CD8-positive, alpha-beta T cell (primary cell): ENCODE measurements at regions of chr12 and their contacts with region 1.

Region 1: DNA sequence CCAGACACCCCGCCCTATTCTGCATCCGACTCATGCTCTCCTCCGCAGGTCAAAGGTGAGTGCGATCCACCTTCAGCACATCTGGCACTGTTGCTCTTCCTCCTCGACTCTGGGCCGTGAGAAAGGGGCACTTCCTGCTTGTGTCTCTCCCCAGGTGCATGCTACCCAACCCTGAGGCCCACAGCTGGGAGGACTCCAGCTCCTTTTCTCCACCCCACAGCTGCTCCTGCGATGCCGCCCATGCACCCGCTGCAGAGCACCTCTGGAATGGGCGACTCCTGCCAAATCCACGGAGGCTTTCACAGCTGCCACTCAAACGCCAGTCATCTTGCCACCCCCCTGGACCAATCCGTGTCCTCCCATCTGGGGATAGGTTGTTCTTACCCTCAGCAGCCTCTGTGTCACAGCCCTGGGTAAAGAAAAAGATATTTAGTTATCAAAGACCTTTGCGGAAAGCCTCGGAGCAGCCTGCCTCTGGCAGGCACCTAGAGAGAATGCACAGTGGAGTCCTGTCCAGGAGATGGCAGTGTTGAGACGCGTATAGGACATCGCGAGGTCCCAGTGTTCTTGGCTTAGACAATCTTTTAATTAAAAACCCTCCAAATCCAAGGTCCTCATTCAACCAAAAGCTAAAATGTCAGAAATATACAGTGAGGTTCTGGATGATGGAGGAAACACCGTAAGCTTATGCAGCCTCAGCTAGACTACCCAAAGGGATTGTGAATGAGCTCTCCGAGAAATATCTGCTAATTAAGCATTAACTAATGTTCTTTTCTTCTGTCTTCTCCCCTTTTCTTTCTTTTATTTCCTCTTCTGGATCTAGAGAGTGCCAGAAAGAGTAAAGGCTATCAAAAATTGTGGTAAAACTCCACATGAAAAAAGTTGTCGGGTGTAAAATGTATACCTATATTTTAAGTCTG is 54.3 kb downstream of the MYRFL start:
- DNase-seq: peak; percentile 18 to 73 (median 63)
- ATAC-seq: peak; percentile 73
- H3K4me3 ChIP-seq: no peak overlapping the region
- H3K4me3 Mint-ChIP-seq: no peak overlapping the region
- H3K27ac ChIP-seq: no peak overlapping the region
- H3K27ac Mint-ChIP-seq: no peak overlapping the region
- H3K4me1 ChIP-seq: no peaks in the 10 kb centered on the region
- H3K4me1 Mint-ChIP-seq: peaks cover 4% of the 10 kb centered on the region
- H3K27me3 ChIP-seq: no peaks in the 10 kb centered on the region
- H3K27me3 Mint-ChIP-seq: peaks cover 25% of the 10 kb centered on the region
- CTCF ChIP-seq: peak; percentile 91

Region 2: GRCh38 chr12:69894800-69895383 is 15.6 kb after region 1 on chr12:
- CTCF ChIA-PET with region 1: interaction called, 16 read pairs
- POLR2A ChIA-PET with region 1: no interaction called
- intact Hi-C with region 1: no loop called
- DNase-seq: no peak
- ATAC-seq: no peak
- H3K4me3 ChIP-seq: no peak overlapping the region
- H3K4me3 Mint-ChIP-seq: no peak overlapping the region
- H3K27ac ChIP-seq: no peak overlapping the region
- H3K27ac Mint-ChIP-seq: no peak overlapping the region
- H3K4me1 ChIP-seq: no peaks in the 10 kb centered on the region
- H3K4me1 Mint-ChIP-seq: no peaks in the 10 kb centered on the region
- H3K27me3 ChIP-seq: no peaks in the 10 kb centered on the region
- H3K27me3 Mint-ChIP-seq: peaks cover 6% of the 10 kb centered on the region
- CTCF ChIP-seq: no peak

Region 3: DNA sequence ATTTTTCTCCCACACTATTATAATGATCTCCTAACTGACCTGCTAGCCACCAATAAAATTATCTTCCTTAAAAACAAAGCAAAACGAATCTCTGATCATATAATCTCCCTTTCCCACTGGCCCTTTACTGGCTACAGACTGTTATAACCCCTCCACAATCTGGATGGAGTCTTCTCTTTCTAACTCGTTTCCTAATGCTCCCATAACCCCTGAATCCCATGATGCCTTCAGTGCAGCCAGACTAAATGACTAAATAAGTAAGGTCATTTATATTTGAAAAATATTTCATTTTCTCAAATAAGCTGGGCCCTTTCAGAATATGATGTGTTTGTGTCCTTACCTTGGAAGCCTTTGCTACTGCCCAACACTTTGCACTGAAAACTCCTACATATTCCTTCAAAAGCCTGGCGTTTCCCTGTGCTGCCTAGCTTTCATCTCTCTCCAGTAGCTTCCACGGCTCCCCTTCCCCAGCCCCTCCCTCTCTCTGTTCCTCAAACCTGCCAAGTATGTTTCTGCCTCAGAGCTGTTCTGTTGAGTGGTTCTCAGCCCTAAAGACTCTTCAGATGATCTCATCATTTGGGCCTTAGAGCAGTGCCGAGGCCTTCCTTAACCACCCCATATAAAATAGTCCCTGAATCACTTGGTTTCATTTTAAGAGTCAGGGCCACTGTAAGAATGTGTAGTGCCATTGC is 37.4 kb after region 1 on chr12:
- CTCF ChIA-PET with region 1: no interaction called
- POLR2A ChIA-PET with region 1: no interaction called
- intact Hi-C with region 1: no loop called
- DNase-seq: no peak
- ATAC-seq: no peak
- H3K4me3 ChIP-seq: no peak overlapping the region
- H3K4me3 Mint-ChIP-seq: no peak overlapping the region
- H3K27ac ChIP-seq: no peak overlapping the region
- H3K27ac Mint-ChIP-seq: no peak overlapping the region
- H3K4me1 ChIP-seq: no peaks in the 10 kb centered on the region
- H3K4me1 Mint-ChIP-seq: no peaks in the 10 kb centered on the region
- H3K27me3 ChIP-seq: no peaks in the 10 kb centered on the region
- H3K27me3 Mint-ChIP-seq: peaks cover 4% of the 10 kb centered on the region
- CTCF ChIP-seq: no peak

Region 4: DNA sequence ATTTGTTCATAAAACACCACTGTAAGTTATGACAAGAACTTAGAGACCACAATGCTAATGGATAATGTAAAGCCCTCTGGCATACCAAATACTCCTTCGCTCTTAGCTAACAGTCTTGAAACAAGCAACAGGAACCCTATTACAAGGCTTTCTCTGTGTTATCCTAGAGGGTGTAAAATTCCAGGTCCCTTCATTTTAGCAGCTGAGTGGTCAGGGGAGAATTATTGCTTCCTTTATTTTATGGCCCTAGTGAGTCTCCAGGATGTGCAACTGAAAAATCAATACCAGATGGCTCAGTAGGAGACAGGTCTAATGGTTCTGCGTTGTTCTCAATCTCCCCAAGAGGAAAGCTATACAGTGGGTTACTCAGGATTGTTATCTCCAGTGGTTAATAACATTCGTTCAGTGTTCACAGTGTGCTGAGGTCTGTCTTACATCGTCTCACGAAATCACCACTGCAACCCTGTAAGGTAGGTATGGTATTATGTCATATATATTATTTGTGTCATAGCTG is 191.2 kb after region 1 on chr12:
- CTCF ChIA-PET with region 1: no interaction called
- POLR2A ChIA-PET with region 1: no interaction called
- intact Hi-C with region 1: no loop called
- DNase-seq: no peak
- ATAC-seq: no peak
- H3K4me3 ChIP-seq: no peak overlapping the region
- H3K4me3 Mint-ChIP-seq: no peak overlapping the region
- H3K27ac ChIP-seq: no peak overlapping the region
- H3K27ac Mint-ChIP-seq: no peak overlapping the region
- H3K4me1 ChIP-seq: no peaks in the 10 kb centered on the region
- H3K4me1 Mint-ChIP-seq: no peaks in the 10 kb centered on the region
- H3K27me3 ChIP-seq: no peaks in the 10 kb centered on the region
- H3K27me3 Mint-ChIP-seq: peaks cover 6% of the 10 kb centered on the region
- CTCF ChIP-seq: no peak

Region 5: GRCh38 chr12:70487440-70487839 is 608.1 kb after region 1 on chr12:
- CTCF ChIA-PET with region 1: no interaction called
- POLR2A ChIA-PET with region 1: no interaction called
- intact Hi-C with region 1: loop called in 1 of 2 experiments (anchors 5 kb)
- DNase-seq: no peak
- ATAC-seq: no peak
- H3K4me3 ChIP-seq: no peak overlapping the region
- H3K4me3 Mint-ChIP-seq: no peak overlapping the region
- H3K27ac ChIP-seq: no peak overlapping the region
- H3K27ac Mint-ChIP-seq: no peak overlapping the region
- H3K4me1 ChIP-seq: no peaks in the 10 kb centered on the region
- H3K4me1 Mint-ChIP-seq: no peaks in the 10 kb centered on the region
- H3K27me3 ChIP-seq: no peaks in the 10 kb centered on the region
- H3K27me3 Mint-ChIP-seq: peaks cover 23% of the 10 kb centered on the region
- CTCF ChIP-seq: no peak

Region 6: GRCh38 chr12:70719672-70720420 is 840.5 kb after region 1 on chr12:
- CTCF ChIA-PET with region 1: interaction called, 7 read pairs
- POLR2A ChIA-PET with region 1: no interaction called
- intact Hi-C with region 1: loop called (anchors 1 kb)
- DNase-seq: peak in 7 of 9 experiments; percentile 2 to 53 (median 29)
- ATAC-seq: peak; percentile 48
- H3K4me3 ChIP-seq: no peak overlapping the region
- H3K4me3 Mint-ChIP-seq: peak overlapping the region; percentile 51
- H3K27ac ChIP-seq: no peak overlapping the region
- H3K27ac Mint-ChIP-seq: no peak overlapping the region
- H3K4me1 ChIP-seq: peaks cover 4% of the 10 kb centered on the region
- H3K4me1 Mint-ChIP-seq: peaks cover 9% of the 10 kb centered on the region
- H3K27me3 ChIP-seq: no peaks in the 10 kb centered on the region
- H3K27me3 Mint-ChIP-seq: peaks cover 12% of the 10 kb centered on the region
- CTCF ChIP-seq: peak; percentile 74